ENCODE measurements at regions of chr10 and their contacts with region 1.

Region 1: DNA sequence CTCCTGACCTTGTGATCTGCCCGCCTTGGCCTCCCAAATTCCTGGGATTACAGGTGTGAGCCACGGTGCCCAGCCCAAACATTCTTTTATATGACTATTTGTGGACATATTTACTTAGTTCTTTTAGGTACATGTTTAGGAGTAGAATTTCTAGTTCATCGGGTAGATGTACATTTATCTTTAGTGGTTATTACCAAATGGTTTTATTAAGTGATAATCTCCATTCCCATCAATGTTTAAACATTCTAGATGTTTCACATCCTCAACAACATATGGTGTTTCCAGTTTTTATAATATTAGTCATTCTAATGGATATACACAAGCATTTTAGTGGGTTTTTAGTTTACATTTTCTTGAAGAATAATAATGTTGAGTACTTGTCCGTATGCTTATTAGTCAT is 131.7 kb downstream of the RTKN2 start:
- DNase-seq: no peak
- H3K4me3 ChIP-seq: no peak overlapping the region
- H3K27ac ChIP-seq: no peak overlapping the region
- H3K4me1 ChIP-seq: no peaks in the 10 kb centered on the region
- H3K27me3 ChIP-seq: no peaks in the 10 kb centered on the region
- CTCF ChIP-seq: no peak

Region 2: DNA sequence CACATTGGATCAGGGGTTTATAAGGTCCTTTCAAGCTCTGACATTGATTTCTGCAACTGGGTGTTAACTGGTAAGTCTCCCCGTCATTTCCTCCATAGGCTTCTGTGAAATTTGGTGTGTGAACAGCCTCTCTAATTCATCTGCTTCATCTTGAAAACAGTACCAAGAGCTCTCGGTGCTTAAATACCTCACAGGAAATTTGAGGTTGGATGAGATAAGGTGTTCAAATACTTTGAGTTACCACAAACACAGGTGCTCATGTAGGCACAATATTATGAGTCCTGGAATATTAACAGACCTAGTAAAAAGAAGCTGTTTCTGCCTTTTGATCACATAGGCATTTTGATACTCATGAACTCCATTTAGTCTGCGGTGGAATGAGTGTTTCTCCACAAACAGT is 46.5 kb after region 1 on chr10:
- CTCF ChIA-PET with region 1: no interaction called
- dilution Hi-C with region 1: no loop called
- in situ Hi-C with region 1: no loop called
- intact Hi-C with region 1: loop called (anchors 5 kb)
- DNase-seq: peak; percentile 31
- H3K4me3 ChIP-seq: no peak overlapping the region
- H3K27ac ChIP-seq: no peak overlapping the region
- H3K4me1 ChIP-seq: no peaks in the 10 kb centered on the region
- H3K27me3 ChIP-seq: no peaks in the 10 kb centered on the region
- CTCF ChIP-seq: no peak

Region 3: DNA sequence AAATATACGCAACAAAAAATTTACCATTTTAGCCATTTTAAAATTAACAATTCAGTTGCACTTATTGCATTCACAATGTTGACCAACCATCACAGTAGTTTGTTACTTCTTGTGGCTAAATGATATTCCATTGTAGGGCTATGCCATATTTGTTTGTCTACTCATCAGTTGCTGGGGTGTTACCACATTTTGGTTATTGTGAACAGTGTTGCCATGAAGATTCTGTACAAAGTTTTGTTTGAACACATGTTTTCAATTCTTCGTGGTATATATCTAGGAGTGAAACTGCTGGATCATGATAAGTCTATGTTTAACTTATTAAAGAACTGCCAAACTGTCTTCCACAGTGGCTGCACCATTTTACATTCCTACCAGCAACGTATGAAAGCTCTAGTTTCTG is 191.0 kb after region 1 on chr10:
- CTCF ChIA-PET with region 1: no interaction called
- dilution Hi-C with region 1: no loop called
- in situ Hi-C with region 1: no loop called
- intact Hi-C with region 1: no loop called
- DNase-seq: peak; percentile 42
- H3K4me3 ChIP-seq: no peak overlapping the region
- H3K27ac ChIP-seq: no peak overlapping the region
- H3K4me1 ChIP-seq: no peaks in the 10 kb centered on the region
- H3K27me3 ChIP-seq: no peaks in the 10 kb centered on the region
- CTCF ChIP-seq: no peak